ENCODE measurements at regions of chr4 and their contacts with region 1.

Region 1: GRCh38 chr4:120922381-120923206 is at the start of gene PRDM5:
- DNase-seq: peak; percentile 58 to 87 (median 76)
- ATAC-seq: peak; percentile 73
- H3K4me3 ChIP-seq: peak within 1 kb of the TSS; percentile 64 to 66
- H3K27ac ChIP-seq: peak within 1 kb of the TSS; percentile 93 to 94
- H3K4me1 ChIP-seq: peaks cover 8 to 50% of the 10 kb centered on the region in 2 donors
- H3K27me3 ChIP-seq: peaks cover 0 to 38% of the 10 kb centered on the region in 2 donors
- CTCF ChIP-seq: no peak
- polyA plus RNA-seq, gene PRDM5: 27.7 to 35.1 (median 31.7) TPM

Region 2: GRCh38 chr4:120630427-120630826 is 292.2 kb before region 1 on chr4:
- intact Hi-C with region 1: no loop called
- DNase-seq: no peak
- ATAC-seq: no peak
- H3K4me3 ChIP-seq: no peak overlapping the region
- H3K27ac ChIP-seq: no peak overlapping the region
- H3K4me1 ChIP-seq: no peaks in the 10 kb centered on the region
- H3K27me3 ChIP-seq: no peaks in the 10 kb centered on the region
- CTCF ChIP-seq: no peak

Region 3: GRCh38 chr4:120723986-120724385 is 198.6 kb before region 1 on chr4:
- intact Hi-C with region 1: loop called in 1 of 2 experiments (anchors 10 kb)
- DNase-seq: no peak
- ATAC-seq: no peak
- H3K4me3 ChIP-seq: no peak overlapping the region
- H3K27ac ChIP-seq: no peak overlapping the region
- H3K4me1 ChIP-seq: no peaks in the 10 kb centered on the region
- H3K27me3 ChIP-seq: no peaks in the 10 kb centered on the region
- CTCF ChIP-seq: no peak